T-cell (primary cell): ENCODE measurements at regions of chr13 and their contacts with region 1.

Region 1: GRCh38 chr13:32650705-32651311 is 64.6 kb downstream of the PDS5B start:
- DNase-seq: peak in 32 of 35 experiments; percentile 7 to 77 (median 39)
- ATAC-seq: peak; percentile 78 to 86 (median 84)
- H3K4me3 ChIP-seq: no peak overlapping the region
- H3K4me3 Mint-ChIP-seq: no peak overlapping the region
- H3K27ac ChIP-seq: no peak overlapping the region
- H3K27ac Mint-ChIP-seq: no peak overlapping the region
- H3K4me1 ChIP-seq: peaks cover 2 to 5% of the 10 kb centered on the region in 2 experiments
- H3K4me1 Mint-ChIP-seq: peaks cover 43 to 64% (median 44%) of the 10 kb centered on the region in 3 donors
- H3K27me3 ChIP-seq: no peaks in the 10 kb centered on the region
- H3K27me3 Mint-ChIP-seq: no peaks in the 10 kb centered on the region

Region 2: DNA sequence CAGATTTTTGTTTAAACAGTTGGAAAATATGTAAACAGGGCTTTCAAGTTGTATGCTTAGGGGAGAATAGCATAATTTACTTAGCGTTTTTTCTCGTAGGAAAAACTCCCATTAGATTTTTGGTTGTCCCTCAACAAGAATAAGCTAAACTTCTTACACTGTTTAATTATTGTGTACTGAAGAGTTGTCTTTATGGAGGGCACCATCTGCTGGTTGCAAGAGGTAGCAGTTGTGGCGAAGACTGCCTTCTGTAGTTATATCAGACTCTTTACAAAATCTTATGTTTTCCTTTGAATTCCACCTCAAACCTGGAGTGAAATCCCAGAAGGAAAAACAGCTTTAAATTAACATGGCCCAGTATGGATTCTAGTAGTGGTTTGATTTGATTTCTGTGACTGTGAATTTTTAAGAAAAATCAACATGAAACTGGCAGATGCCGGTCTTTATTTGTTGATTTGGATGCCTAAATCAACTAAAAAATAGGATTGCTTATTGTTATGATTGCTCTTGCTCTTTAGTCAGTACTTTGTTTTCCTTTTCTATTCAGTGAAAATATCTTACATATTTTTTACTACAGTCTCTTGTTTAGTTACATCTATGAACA is 11.2 kb before region 1 on chr13:
- CTCF ChIA-PET with region 1: interaction called, 12 to 29 read pairs
- POLR2A ChIA-PET with region 1: interaction called, 6 to 7 read pairs
- DNase-seq: peak in 33 of 35 experiments; percentile 12 to 79 (median 46)
- ATAC-seq: peak; percentile 84 to 96 (median 94)
- H3K4me3 ChIP-seq: no peak overlapping the region
- H3K4me3 Mint-ChIP-seq: no peak overlapping the region
- H3K27ac ChIP-seq: no peak overlapping the region
- H3K27ac Mint-ChIP-seq: no peak overlapping the region
- H3K4me1 ChIP-seq: peaks cover 0 to 9% of the 10 kb centered on the region in 2 experiments
- H3K4me1 Mint-ChIP-seq: peaks cover 33 to 38% (median 36%) of the 10 kb centered on the region in 3 donors
- H3K27me3 ChIP-seq: no peaks in the 10 kb centered on the region
- H3K27me3 Mint-ChIP-seq: no peaks in the 10 kb centered on the region

Region 3: GRCh38 chr13:32669030-32669646 is 18.3 kb after region 1 on chr13:
- CTCF ChIA-PET with region 1: interaction called, 7 to 36 read pairs
- POLR2A ChIA-PET with region 1: no interaction called
- DNase-seq: peak in 7 of 35 experiments; percentile 6 to 67 (median 9)
- ATAC-seq: peak in 1 of 4 experiments; percentile 50
- H3K4me3 ChIP-seq: no peak overlapping the region
- H3K4me3 Mint-ChIP-seq: no peak overlapping the region
- H3K27ac ChIP-seq: no peak overlapping the region
- H3K27ac Mint-ChIP-seq: no peak overlapping the region
- H3K4me1 ChIP-seq: no peaks in the 10 kb centered on the region
- H3K4me1 Mint-ChIP-seq: peaks cover 12 to 19% (median 12%) of the 10 kb centered on the region in 3 donors
- H3K27me3 ChIP-seq: no peaks in the 10 kb centered on the region
- H3K27me3 Mint-ChIP-seq: no peaks in the 10 kb centered on the region